Mammary epithelial cell (primary cell): ENCODE measurements at regions of chr19 and their contacts with region 1.

Region 1: DNA sequence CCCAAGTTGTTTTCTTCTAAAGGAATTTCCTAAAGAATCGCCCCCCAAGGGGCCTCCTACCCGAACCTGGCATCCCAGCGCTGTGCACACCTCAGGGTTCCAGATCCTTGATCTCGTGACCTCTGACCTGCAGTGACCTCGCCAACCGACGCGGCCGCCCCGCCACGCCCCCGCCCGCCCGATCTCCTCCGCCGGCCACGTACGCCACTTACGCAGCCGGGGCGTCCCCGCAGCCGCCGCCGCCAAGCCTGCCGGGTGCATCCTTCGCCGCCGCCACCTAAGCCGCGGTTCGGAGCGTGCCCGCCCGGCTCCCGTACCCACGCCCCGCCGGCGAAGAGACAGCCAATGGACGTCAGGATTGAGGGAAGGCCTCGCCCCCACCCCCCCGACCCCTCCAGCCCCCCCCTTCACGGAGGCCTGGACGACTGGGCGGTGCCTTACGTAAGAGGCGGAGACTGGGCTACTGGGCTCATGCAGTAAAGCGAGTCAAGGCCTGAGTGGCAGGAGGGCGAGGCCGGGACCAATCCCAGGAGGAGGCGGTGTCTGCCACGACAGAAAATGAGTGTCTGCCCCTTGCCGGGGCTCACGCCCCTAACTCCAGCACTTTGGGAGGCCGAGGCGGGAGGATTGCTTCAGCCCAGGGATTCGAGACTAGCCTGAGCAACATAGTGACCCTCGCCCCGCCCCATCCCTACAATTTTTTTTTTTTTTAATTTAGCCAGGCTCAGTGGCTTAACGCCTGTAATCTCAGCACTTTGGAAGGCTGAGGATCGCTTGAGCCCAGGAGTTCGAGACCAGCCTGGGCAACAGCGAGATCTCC is at the start of gene YIF1B:
- DNase-seq: peak; percentile 95
- H3K4me3 ChIP-seq: peak within 1 kb of the TSS; percentile 47 to 63 (median 51)
- H3K27ac ChIP-seq: peak within 1 kb of the TSS; percentile 69
- H3K4me1 ChIP-seq: peaks cover 32% of the 10 kb centered on the region
- H3K27me3 ChIP-seq: no peaks in the 10 kb centered on the region
- CTCF ChIP-seq: no peak
- total RNA-seq, gene YIF1B: 43.8 to 74.7 TPM

Region 2: GRCh38 chr19:38216785-38217641 is 98.9 kb before region 1 on chr19:
- CTCF ChIA-PET with region 1: no interaction called
- dilution Hi-C with region 1: loop called (anchors 5 kb)
- in situ Hi-C with region 1: no loop called
- intact Hi-C with region 1: no loop called
- DNase-seq: no peak
- H3K4me3 ChIP-seq: no peak overlapping the region
- H3K27ac ChIP-seq: no peak overlapping the region
- H3K4me1 ChIP-seq: peaks cover 13% of the 10 kb centered on the region
- H3K27me3 ChIP-seq: no peaks in the 10 kb centered on the region
- CTCF ChIP-seq: no peak

Region 3: DNA sequence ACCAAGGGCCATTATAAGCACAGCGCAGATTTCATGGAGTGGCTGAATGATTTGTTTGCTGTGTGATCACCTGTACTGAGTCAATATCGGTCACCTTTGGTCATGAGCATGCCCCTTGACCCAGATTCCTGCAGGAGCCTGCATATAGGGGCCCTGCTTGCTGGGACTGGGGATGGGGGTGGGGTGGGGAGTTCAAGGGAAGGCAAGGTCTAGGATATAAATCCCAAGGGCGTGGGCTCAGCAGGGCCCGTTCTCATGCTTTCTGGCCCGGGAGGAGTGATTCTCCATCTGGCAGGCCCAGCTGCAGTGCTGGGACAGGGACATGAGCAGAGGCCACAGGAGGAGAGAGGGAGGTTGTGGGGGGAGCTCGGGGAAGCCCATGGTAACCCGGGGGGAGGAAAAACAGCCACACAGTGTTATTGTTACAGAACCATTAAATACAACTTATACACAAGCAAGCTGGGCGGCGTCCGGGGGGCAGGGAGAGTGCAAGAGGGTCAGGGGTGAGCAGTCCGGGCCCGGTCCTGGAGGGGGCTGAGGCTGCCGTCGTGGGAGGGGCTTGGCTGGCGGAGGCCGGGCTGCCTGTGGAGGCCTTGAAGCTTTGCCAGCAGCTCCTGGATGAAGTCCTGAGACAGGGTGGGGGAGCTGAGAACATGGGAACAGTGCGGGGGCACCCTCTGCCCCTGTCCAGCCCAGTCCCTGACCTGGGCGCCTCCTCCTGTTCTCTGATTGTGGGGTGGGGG is 64.9 kb before region 1 on chr19:
- CTCF ChIA-PET with region 1: no interaction called
- dilution Hi-C with region 1: loop called (anchors 5 kb)
- in situ Hi-C with region 1: no loop called
- intact Hi-C with region 1: no loop called
- DNase-seq: no peak
- H3K4me3 ChIP-seq: peak overlapping the region in 2 of 3 experiments; percentile 14 to 17
- H3K27ac ChIP-seq: no peak overlapping the region
- H3K4me1 ChIP-seq: peaks cover 25% of the 10 kb centered on the region
- H3K27me3 ChIP-seq: no peaks in the 10 kb centered on the region
- CTCF ChIP-seq: no peak

Region 4: DNA sequence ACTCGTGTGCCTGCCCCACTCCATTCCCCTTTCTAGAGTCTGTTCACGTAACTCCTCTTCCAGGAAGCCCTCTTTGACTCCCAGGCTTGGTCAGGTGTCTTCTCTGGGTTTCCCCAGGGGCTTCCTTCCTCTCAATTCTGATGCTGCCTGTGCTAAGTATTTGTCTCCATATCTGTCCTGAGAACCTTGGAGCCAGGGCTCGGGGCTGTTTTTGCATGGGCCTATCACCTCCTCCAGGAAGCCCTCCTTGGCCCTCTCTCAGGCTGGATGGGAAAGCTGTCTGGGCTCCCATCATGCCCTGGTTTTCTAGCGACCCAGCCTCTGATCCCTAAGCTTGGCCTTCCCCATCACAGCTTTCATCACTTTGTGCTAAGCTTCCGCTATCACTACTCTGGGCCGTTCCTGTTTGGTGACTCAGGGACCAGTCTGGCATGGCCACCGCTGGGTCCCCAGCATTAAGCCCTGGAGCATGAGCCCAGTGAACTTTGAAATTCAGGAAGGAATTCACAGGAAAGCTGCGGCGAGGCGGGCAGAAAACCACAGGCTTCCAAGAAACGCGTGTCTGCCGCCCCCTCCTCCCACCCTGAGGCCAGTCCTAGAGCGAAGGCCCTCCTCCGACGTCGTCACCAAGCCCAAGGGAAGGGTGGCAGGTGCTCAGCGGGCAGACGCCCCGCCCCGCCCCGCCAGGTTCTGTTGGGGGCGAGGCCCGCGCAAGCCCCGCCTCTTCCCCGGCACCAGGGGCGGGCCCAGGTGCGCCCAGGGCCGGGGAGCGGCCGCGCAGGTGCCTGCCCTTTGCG is 52.0 kb before region 1 on chr19:
- CTCF ChIA-PET with region 1: no interaction called
- dilution Hi-C with region 1: no loop called
- in situ Hi-C with region 1: no loop called
- intact Hi-C with region 1: loop called (anchors 2 kb)
- DNase-seq: peak; percentile 95
- H3K4me3 ChIP-seq: peak overlapping the region in 2 of 3 experiments; percentile 7 to 83
- H3K27ac ChIP-seq: peak overlapping the region; percentile 90
- H3K4me1 ChIP-seq: peaks cover 28% of the 10 kb centered on the region
- H3K27me3 ChIP-seq: no peaks in the 10 kb centered on the region
- CTCF ChIP-seq: no peak

Region 5: DNA sequence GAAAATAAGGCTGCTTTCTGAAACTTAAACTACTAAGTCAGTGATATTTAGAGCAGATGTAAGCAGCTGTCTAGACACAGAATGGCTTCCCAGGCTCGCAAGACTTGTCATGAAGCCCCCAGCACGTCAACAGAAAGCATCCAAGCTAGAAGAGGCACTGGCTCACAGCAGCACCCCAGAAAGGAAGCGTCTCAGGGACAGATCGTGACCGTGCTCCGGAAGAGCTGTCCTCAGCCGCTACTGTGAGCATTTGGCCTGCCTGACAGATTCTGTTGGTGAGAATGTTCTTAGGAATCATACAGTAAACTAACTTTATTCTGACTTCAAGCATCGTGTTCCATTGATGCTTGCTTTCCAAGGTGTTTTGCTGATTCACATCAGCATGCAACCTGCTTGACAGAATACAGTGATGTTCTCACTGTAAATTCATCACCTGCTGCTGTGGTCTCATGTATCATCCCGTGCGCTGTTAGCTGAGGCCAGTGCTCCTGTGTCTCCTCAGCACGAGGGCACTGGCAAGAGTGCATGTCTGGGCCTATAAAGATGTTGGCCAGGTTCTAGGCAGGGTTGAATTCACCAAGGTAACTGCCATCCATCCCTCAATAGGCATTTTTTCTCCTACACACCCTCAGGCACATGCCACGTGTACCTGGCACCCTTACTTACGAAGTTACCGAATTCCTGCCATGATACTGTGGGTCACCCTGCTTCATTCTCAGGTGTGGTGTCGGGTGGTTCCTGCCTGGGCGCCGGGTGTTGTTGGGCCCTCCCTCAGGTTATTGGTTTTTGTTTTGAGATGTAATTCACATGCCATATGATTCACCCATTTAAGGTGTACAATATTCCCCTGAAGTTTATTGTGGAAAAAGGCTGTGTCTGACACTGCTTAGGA is 35.6 kb before region 1 on chr19:
- CTCF ChIA-PET with region 1: no interaction called
- dilution Hi-C with region 1: no loop called
- in situ Hi-C with region 1: no loop called
- intact Hi-C with region 1: loop called (anchors 1 kb)
- DNase-seq: peak; percentile 79
- H3K4me3 ChIP-seq: no peak overlapping the region
- H3K27ac ChIP-seq: peak overlapping the region; percentile 69
- H3K4me1 ChIP-seq: peaks cover 52% of the 10 kb centered on the region
- H3K27me3 ChIP-seq: no peaks in the 10 kb centered on the region
- CTCF ChIP-seq: no peak

Region 6: DNA sequence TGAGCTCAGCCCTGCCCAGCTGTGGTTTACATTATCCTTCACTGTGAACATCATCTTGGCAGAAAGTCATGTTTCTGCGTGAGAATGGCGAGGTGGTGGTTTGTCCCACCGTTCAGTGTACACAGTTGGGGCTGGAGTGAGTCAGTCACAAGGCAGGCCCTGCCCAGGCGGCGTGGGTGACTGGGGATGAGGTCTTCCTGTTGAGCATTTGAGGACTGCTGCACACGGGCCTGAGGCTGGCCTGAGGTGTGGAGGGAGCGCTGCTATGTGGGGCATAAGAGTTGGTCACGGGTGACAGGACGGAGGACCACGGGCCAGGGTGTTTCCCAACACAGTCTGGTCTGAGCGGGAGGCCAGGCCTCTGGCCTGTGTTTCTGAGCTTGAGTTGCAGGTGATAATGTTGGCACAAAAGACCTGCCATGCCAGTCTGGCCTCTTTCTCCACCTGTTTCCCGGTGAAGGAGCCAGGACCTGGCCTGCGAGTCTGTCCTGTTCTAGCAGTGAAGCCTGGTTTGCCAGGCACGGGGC is 25.2 kb before region 1 on chr19:
- CTCF ChIA-PET with region 1: no interaction called
- dilution Hi-C with region 1: no loop called
- in situ Hi-C with region 1: no loop called
- intact Hi-C with region 1: no loop called
- DNase-seq: peak; percentile 93
- H3K4me3 ChIP-seq: no peak overlapping the region
- H3K27ac ChIP-seq: peak overlapping the region; percentile 50
- H3K4me1 ChIP-seq: peaks cover 45% of the 10 kb centered on the region
- H3K27me3 ChIP-seq: no peaks in the 10 kb centered on the region
- CTCF ChIP-seq: no peak

Region 7: DNA sequence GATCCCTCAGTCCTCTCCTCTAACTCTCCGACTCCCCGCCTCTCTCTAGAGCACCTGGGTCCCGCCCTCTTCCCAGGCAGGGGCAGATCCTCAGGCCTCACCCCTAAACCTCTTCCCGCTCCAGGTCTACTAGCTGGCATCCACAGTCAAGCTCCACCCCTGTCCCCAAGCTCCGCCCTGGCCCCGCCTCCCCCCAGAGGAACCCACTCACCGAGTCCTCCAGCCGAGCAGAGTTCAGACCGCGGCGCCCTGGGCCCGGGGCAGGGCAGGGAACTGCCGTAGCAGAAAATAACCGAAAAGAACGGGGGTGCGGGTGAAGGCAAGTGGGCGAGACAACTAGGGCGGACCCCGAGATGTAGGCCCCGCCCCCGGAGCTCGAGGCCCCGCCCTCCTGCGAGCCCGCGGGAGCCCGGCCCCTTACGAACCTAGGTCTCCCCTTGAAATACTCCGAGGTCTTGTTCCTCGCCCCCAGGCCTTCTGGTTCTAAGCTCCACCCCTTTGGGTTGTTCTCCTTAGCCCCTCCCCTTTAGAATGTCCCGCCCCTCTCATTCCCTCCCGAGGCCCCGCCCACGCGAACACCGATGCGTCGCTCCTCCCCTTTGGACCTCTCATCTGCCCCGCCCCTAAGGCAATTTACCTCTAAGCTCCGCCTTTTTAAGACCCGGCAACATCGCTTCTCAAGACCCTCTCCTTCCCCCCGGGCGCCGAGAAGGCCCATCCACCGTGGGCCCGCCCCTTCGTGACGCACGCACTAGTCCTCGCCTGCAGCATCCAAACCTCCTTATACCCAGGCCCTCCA is 71.9 kb after region 1 on chr19 and contains the start of gene GGN:
- CTCF ChIA-PET with region 1: no interaction called
- dilution Hi-C with region 1: loop called (anchors 5 kb)
- in situ Hi-C with region 1: no loop called
- intact Hi-C with region 1: no loop called
- DNase-seq: peak; percentile 87
- H3K4me3 ChIP-seq: peak within 1 kb of the TSS; percentile 38 to 57 (median 50)
- H3K27ac ChIP-seq: no peak within 1 kb of the TSS
- H3K4me1 ChIP-seq: peaks cover 24% of the 10 kb centered on the region
- H3K27me3 ChIP-seq: no peaks in the 10 kb centered on the region
- CTCF ChIP-seq: no peak
- total RNA-seq, gene GGN: 0.17 to 0.68 TPM